H1 (cell line): ENCODE measurements at regions of chr1 and their contacts with region 1.

Region 1: DNA sequence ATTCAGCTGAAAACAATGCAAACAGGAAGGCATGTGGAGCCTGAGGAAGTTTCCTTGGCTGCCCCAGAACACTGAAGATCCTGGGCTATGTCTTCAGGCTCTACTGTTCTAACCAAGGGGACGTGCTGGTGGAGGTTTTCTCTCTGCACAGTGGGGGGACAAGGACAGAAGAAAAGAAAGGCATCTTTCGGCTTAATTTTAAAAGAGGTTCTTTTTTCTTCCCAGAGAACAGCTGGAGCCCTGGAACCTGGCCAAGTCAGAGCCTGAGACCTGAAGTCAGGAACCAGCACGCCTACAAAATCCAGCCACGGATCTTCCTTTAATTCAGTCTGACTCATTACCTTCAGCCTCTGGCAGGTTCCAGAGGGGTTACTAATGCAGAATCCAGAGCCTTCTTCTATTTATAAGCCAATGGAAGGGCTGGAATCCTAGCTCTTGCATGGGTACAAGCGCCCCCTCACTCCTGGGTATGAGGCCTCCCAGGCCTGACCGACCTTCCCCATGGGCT is 19.8 kb downstream of the CTNNBIP1 start:
- DNase-seq: no peak
- H3K4me3 ChIP-seq: no peak overlapping the region
- H3K27ac ChIP-seq: 0 out of 2 replicates have a peak overlapping the region, but pooled peaks have one; percentile 31
- H3K4me1 ChIP-seq: peaks cover 5 to 18% (median 14%) of the 10 kb centered on the region in 4 experiments
- H3K27me3 ChIP-seq: no peaks in the 10 kb centered on the region
- CTCF ChIP-seq: no peak
- EP300 ChIP-seq: no peak
- POLR2A ChIP-seq: no peak
- RAD21 ChIP-seq: no peak

Region 2: DNA sequence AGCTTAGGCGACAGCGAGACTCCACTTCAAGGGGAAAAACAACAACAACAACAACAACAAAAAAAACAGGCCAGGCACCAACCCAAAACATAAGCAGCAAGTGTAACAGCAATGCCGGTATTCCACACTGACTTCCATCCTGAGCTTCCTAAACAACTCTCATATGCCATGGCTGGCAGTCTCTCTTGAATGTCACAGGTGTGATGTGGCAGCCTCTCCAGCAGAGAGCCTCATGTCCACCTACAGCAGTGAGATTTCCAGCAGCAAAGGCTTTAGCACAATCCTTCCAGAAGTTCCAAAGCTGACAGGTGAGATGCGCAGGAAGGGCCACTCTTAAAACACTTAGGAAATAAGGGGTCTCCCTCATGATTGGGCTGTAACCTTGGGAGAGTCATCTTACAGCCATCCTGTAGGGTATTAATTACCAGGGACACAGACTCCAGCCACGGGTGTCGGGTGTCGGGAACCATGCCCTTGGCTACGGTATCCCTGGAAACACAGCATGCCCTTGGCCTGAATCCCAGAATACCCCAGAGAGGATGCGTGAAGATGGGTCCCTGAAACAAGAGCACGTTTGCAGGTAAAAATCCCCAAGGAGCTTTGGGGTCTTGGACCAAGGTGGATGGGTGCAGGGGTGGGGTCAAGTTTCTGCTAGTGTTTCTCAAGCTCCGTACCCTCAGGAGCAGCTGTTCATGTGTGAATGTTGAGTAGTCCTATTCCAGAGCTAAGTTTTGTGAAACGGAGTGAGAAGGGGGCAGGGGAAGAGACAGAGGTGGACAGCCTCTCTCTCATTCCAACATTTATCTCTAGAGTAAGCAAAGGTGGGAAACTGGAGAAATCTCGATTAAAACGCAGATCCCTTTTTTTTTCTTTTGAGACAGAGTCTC is 97.9 kb before region 1 on chr1:
- CTCF ChIA-PET with region 1: interaction called, 11 read pairs
- POLR2A ChIA-PET with region 1: interaction called, 4 read pairs
- DNase-seq: peak in 1 of 2 experiments; percentile 72
- H3K4me3 ChIP-seq: no peak overlapping the region
- H3K27ac ChIP-seq: no peak overlapping the region
- H3K4me1 ChIP-seq: peaks cover 3 to 23% (median 11%) of the 10 kb centered on the region in 4 experiments
- H3K27me3 ChIP-seq: no peaks in the 10 kb centered on the region
- CTCF ChIP-seq: peak; percentile 2 to 37 (median 5); a peak in 2 of 4 replicates
- EP300 ChIP-seq: no peak
- POLR2A ChIP-seq: no peak
- RAD21 ChIP-seq: peak in 1 of 2 experiments; percentile 27; a peak in 1 of 4 replicates

Region 3: DNA sequence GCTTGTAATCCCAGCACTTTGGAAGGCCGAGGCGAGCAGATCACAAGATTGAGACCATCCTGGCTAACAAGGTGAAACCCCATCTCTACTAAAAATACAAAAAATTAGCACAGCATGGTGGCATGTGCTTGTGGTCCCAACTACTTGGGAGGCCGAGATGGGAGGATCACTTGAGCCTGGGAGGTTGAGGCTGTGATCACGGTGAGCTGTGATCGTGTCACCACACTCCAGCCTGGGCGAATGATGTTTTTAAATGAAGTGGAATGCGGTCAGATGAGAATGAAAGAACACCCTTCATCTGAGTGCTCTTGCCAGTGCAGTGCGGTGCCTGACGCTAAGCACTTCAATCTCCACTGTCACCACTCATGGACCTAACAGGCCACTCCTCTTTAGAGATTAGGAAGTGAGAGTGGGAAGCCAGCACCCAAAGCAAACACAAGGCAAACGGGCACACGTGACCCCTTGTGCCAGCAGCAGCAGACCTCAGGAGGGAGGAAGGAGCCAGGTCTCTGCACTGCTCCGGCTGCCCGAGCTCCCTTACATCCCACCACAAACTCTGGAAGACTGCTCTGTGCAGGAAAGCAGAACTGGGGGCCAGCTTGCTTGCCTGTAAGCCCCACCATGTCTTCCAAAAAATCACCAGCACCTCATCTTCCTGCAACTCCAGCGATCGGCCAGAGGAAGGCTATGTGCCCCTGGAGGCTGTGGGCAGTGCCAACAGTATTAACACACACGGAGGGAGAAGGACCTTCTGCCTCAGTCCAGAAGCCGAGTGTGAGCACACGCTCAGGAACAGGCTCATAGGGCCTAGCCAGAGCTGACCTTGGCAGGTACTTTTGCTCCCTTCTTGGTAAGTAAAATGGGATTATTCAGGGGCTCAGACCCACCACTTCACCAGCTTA is 10.1 kb after region 1 on chr1:
- CTCF ChIA-PET with region 1: interaction called, 13 read pairs
- POLR2A ChIA-PET with region 1: interaction called, 19 read pairs
- DNase-seq: no peak
- H3K4me3 ChIP-seq: no peak overlapping the region
- H3K27ac ChIP-seq: no peak overlapping the region
- H3K4me1 ChIP-seq: no peaks in the 10 kb centered on the region; a peak in 1 of 7 replicates
- H3K27me3 ChIP-seq: no peaks in the 10 kb centered on the region
- CTCF ChIP-seq: no peak
- EP300 ChIP-seq: no peak
- POLR2A ChIP-seq: no peak
- RAD21 ChIP-seq: no peak